ENCODE measurements at regions of chr16 and their contacts with region 1.

Region 1: GRCh38 chr16:14300705-14301168 is 229.6 kb downstream of the MRTFB start:
- DNase-seq: peak; percentile 66 to 83 (median 76)
- ATAC-seq: peak; percentile 76 to 86 (median 80)
- H3K4me3 ChIP-seq: peak overlapping the region in 11 of 12 donors; percentile 37 to 99 (median 85)
- H3K27ac ChIP-seq: peak overlapping the region in 10 of 12 donors; percentile 49 to 93 (median 82)
- H3K4me1 ChIP-seq: peaks cover 0 to 33% (median 11%) of the 10 kb centered on the region in 12 donors
- H3K27me3 ChIP-seq: peaks cover 0 to 24% (median 0%) of the 10 kb centered on the region in 9 donors
- CTCF ChIP-seq: peak in 11 of 12 donors; percentile 37 to 76 (median 58)
- POLR2A ChIP-seq: no peak

Region 2: GRCh38 chr16:14003074-14003570 is 297.6 kb before region 1 on chr16:
- intact Hi-C with region 1: no loop called
- DNase-seq: peak; percentile 74 to 83 (median 78)
- ATAC-seq: peak; percentile 41 to 75 (median 74)
- H3K4me3 ChIP-seq: peak overlapping the region in 11 of 12 donors; percentile 6 to 51 (median 37)
- H3K27ac ChIP-seq: peak overlapping the region in 11 of 12 donors; percentile 27 to 85 (median 74)
- H3K4me1 ChIP-seq: peaks cover 0 to 70% (median 47%) of the 10 kb centered on the region in 12 donors
- H3K27me3 ChIP-seq: no peaks in the 10 kb centered on the region
- CTCF ChIP-seq: peak in 6 of 12 donors; percentile 6 to 37 (median 24)
- POLR2A ChIP-seq: no peak

Region 3: DNA sequence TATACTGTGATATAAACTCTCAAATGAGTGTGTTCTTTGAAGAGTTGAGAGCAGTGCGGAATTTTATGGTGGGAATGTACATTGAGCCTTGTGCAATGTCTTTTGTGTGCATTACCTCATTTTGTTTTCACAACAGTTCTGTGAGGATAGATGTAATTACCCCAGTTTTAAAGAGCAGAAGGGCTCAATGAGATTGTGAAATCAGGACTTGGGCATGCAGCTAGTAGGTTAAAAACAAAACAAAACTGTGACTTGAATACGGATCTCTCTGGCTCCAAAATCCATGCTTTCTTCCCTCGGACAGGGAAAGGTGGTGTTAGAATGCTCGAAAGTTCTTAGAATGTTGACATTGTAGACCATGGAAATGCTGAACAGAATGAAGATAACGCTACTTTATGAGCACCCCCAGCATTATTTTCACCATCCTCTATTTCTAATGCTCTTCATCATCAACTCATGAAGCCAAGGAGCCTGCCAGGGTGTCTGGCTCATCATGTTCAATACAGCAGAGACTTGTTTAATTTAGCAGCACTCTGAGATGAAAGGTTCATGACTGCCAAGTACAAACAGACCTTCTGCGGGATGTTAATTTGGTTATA is 212.5 kb before region 1 on chr16:
- intact Hi-C with region 1: no loop called
- DNase-seq: peak in 1 of 5 donors; percentile 41
- ATAC-seq: peak; percentile 72 to 87 (median 81)
- H3K4me3 ChIP-seq: no peak overlapping the region
- H3K27ac ChIP-seq: peak overlapping the region in 2 of 12 donors; percentile 12 to 55
- H3K4me1 ChIP-seq: peaks cover 0 to 59% (median 25%) of the 10 kb centered on the region in 12 donors
- H3K27me3 ChIP-seq: no peaks in the 10 kb centered on the region
- CTCF ChIP-seq: no peak
- POLR2A ChIP-seq: no peak

Region 4: DNA sequence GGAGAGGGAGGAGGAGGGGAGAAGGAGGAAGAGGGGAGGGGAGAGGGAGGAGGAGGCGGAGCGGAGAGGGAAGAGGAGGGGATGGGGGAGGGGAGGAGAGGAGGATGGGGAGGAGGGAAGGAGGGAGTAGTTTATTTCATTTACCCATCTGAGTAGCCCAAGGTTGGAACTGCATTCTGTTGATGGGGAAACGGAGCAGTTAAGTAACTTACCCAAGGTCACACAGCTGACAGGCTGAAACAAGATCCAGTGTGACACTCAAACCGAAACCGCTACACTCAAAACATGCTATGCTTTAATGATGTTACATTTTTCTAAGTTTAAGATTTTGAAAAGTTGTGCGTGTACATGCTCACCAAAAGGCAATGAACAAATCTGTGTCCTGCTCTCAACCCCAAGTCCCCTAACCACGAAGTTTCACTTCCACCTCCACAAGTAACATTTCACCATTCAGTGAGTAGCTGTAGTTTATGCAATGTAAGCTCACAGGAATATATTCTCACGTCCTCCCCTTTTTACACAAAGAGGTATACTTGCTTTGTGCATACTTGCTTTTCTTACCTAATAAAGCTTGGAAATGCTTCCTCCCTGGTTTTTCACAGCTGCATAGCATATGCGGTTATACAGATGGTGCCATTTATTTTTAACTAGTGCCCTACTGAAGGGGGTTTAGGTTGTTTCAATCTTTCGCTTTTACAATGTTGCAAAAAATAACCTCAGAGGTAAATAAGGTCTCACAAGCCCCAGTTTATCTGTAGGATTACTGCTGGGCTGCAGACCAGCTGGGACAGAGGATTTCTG is 54.0 kb after region 1 on chr16:
- intact Hi-C with region 1: loop called in 2 of 10 experiments (anchors 5 to 10 kb)
- DNase-seq: no peak
- ATAC-seq: peak in 3 of 4 donors; percentile 45 to 58 (median 52)
- H3K4me3 ChIP-seq: peak overlapping the region in 1 of 12 donors; percentile 17
- H3K27ac ChIP-seq: no peak overlapping the region
- H3K4me1 ChIP-seq: peaks cover 0 to 15% (median 5%) of the 10 kb centered on the region in 12 donors
- H3K27me3 ChIP-seq: peaks cover 0 to 2% (median 0%) of the 10 kb centered on the region in 9 donors
- CTCF ChIP-seq: no peak
- POLR2A ChIP-seq: no peak

Region 5: DNA sequence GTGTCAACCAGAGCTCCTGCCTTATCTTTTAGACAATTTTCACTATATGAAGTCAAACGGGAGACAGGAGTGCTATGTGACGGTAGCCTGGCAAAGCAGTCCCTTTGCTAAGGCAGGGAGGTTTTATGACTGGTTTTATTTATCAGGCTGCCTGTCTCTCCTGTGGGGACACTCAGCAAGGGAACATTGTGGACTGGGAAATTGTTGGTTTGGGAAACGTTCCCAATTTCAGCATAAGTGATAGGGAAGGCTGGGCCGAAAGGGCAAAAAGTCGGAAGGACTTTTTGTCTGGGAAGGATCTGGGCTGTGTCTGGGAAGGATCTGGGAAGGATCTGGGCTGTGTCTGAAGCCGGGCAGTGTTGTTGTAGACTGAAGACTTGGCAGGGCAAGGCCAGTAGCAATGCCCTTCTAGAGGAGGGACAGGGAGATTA is 118.1 kb after region 1 on chr16:
- intact Hi-C with region 1: loop called in 3 of 10 experiments (anchors 5 to 10 kb)
- DNase-seq: peak in 3 of 5 donors; percentile 23 to 64 (median 43)
- ATAC-seq: peak; percentile 87 to 90 (median 88)
- H3K4me3 ChIP-seq: peak overlapping the region in 3 of 12 donors; percentile 16 to 22 (median 20)
- H3K27ac ChIP-seq: peak overlapping the region; percentile 58 to 85 (median 69)
- H3K4me1 ChIP-seq: peaks cover 0 to 26% (median 9%) of the 10 kb centered on the region in 12 donors
- H3K27me3 ChIP-seq: no peaks in the 10 kb centered on the region
- CTCF ChIP-seq: no peak
- POLR2A ChIP-seq: no peak

Region 6: DNA sequence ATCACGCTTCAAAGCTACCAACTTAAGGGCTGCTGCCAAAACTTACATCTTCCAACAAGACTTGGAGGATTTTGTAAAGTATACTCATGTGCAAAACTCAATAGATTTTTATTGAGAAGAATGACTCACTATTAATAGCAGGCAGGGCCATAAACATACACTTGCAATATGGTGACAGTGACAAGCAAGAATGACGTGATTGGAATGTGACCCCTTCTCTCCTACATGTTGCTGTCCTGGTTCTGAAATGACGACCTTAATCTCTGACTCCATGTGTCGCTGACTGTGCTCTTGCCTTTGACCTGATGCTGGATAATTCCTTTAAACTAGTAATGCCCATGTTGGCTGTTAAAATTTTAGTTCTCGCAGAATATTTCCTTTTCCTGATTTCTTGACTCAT is 154.8 kb after region 1 on chr16:
- intact Hi-C with region 1: loop called in 1 of 10 experiments (anchors 10 kb)
- DNase-seq: no peak
- ATAC-seq: peak in 2 of 4 donors; percentile 43 to 66
- H3K4me3 ChIP-seq: no peak overlapping the region
- H3K27ac ChIP-seq: no peak overlapping the region
- H3K4me1 ChIP-seq: peaks cover 0 to 7% (median under 1%) of the 10 kb centered on the region in 12 donors
- H3K27me3 ChIP-seq: no peaks in the 10 kb centered on the region
- CTCF ChIP-seq: no peak
- POLR2A ChIP-seq: no peak

Region 7: GRCh38 chr16:14529010-14529669 is 228.4 kb after region 1 on chr16:
- intact Hi-C with region 1: loop called (anchors 1 to 5 kb)
- DNase-seq: peak in 4 of 5 donors; percentile 64 to 77 (median 76)
- ATAC-seq: peak; percentile 72 to 91 (median 88)
- H3K4me3 ChIP-seq: peak overlapping the region in 6 of 12 donors; percentile 2 to 42 (median 34)
- H3K27ac ChIP-seq: peak overlapping the region in 6 of 12 donors; percentile 2 to 54 (median 40)
- H3K4me1 ChIP-seq: peaks cover 0 to 26% (median 7%) of the 10 kb centered on the region in 12 donors
- H3K27me3 ChIP-seq: no peaks in the 10 kb centered on the region
- CTCF ChIP-seq: peak; percentile 51 to 80 (median 74)
- POLR2A ChIP-seq: no peak

Measured in heart left ventricle (tissue), 16 donors.